ENCODE measurements at regions of chr5 and their contacts with region 1.

Region 1: GRCh38 chr5:72523960-72524582 is 16.9 kb upstream of the ZNF366 start:
- DNase-seq: peak; percentile 81 to 87 (median 84)
- H3K4me3 ChIP-seq: no peak overlapping the region
- H3K27ac ChIP-seq: no peak overlapping the region
- H3K4me1 ChIP-seq: peaks cover 0 to 7% (median 0%) of the 10 kb centered on the region in 4 experiments
- H3K27me3 ChIP-seq: no peaks in the 10 kb centered on the region

Region 2: DNA sequence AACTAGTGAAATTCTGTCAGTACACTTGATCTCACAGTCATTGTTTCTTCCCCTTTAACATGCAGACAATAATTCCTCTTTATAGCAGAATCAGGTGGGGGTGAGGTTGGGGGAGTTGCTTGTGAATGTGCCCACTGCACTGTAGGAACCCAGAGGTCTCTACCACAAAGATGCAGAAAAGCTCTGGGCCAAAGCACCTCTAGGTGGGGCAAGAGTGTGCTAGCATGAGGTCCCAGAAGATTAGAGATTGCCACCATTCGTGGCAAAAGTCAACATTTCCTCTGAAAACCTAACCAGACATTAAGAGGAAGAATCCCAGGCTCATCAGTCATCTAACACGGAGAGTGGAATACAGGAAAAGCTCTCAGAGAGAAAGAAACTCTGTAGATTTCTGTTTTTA is 129.4 kb before region 1 on chr5:
- CTCF ChIA-PET with region 1: interaction called, 11 read pairs
- POLR2A ChIA-PET with region 1: no interaction called
- DNase-seq: peak; percentile 56 to 68 (median 68)
- H3K4me3 ChIP-seq: no peak overlapping the region
- H3K27ac ChIP-seq: no peak overlapping the region
- H3K4me1 ChIP-seq: peaks cover 0 to 22% (median 0%) of the 10 kb centered on the region in 4 experiments
- H3K27me3 ChIP-seq: no peaks in the 10 kb centered on the region

Region 3: GRCh38 chr5:72511774-72512592 is 12.1 kb before region 1 on chr5:
- CTCF ChIA-PET with region 1: interaction called, 13 read pairs
- POLR2A ChIA-PET with region 1: no interaction called
- DNase-seq: no peak
- H3K4me3 ChIP-seq: no peak overlapping the region
- H3K27ac ChIP-seq: no peak overlapping the region
- H3K4me1 ChIP-seq: peaks cover 17 to 52% (median 30%) of the 10 kb centered on the region in 4 experiments
- H3K27me3 ChIP-seq: no peaks in the 10 kb centered on the region

Measured in common myeloid progenitor, CD34-positive (primary cell).